ENCODE measurements at regions of chr3 and their contacts with region 1.

Region 1: GRCh38 chr3:195697582-195698301 is 23.0 kb upstream of the MUC20 start:
- DNase-seq: no peak
- ATAC-seq: no peak
- H3K4me3 ChIP-seq: no peak overlapping the region
- H3K27ac ChIP-seq: no peak overlapping the region
- H3K4me1 ChIP-seq: no peaks in the 10 kb centered on the region
- H3K27me3 ChIP-seq: no peaks in the 10 kb centered on the region
- CTCF ChIP-seq: no peak
- EP300 ChIP-seq: no peak
- POLR2A ChIP-seq: no peak
- RAD21 ChIP-seq: no peak

Region 2: GRCh38 chr3:195956571-195956970 is 258.8 kb after region 1 on chr3:
- CTCF ChIA-PET with region 1: no interaction called
- POLR2A ChIA-PET with region 1: no interaction called
- in situ Hi-C with region 1: loop called (anchors 25 kb)
- intact Hi-C with region 1: no loop called
- DNase-seq: no peak
- ATAC-seq: no peak
- H3K4me3 ChIP-seq: no peak overlapping the region
- H3K27ac ChIP-seq: no peak overlapping the region
- H3K4me1 ChIP-seq: no peaks in the 10 kb centered on the region
- H3K27me3 ChIP-seq: no peaks in the 10 kb centered on the region
- CTCF ChIP-seq: no peak
- EP300 ChIP-seq: no peak
- POLR2A ChIP-seq: no peak
- RAD21 ChIP-seq: no peak

Region 3: DNA sequence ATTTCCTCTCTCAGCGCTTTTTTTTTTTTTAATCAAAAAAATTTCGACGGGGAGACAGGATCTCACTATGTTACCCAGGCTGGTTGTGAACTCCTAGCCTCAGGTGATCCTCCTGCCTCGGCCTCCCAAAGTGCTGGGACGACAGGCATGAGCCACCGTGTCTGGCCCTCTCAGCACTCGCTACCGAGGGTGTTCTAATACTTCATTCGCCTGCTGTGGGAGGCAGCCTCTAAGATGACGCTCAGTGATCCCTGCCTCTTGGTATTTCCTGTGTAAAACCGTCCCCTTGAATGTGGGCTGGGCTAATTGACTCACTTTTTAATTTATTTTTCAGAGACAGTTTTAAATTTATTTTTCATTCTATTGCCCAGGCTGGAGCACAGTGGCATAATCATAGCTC is 447.0 kb after region 1 on chr3:
- CTCF ChIA-PET with region 1: no interaction called
- POLR2A ChIA-PET with region 1: no interaction called
- in situ Hi-C with region 1: no loop called
- intact Hi-C with region 1: no loop called
- DNase-seq: no peak
- ATAC-seq: no peak
- H3K4me3 ChIP-seq: no peak overlapping the region
- H3K27ac ChIP-seq: no peak overlapping the region
- H3K4me1 ChIP-seq: peaks cover 42% of the 10 kb centered on the region
- H3K27me3 ChIP-seq: peaks cover 2 to 7% of the 10 kb centered on the region in 2 experiments; a peak in 3 of 5 replicates
- CTCF ChIP-seq: no peak
- EP300 ChIP-seq: no peak
- POLR2A ChIP-seq: no peak
- RAD21 ChIP-seq: no peak